ENCODE measurements at regions of chr10 and their contacts with region 1.

Region 1: GRCh38 chr10:28669227-28670167 is 7.8 kb upstream of the BAMBI start:
- DNase-seq: no peak
- ATAC-seq: no peak
- H3K4me3 ChIP-seq: peak overlapping the region in 11 of 12 donors; percentile 23 to 67 (median 51)
- H3K27ac ChIP-seq: no peak overlapping the region
- H3K4me1 ChIP-seq: peaks cover 0 to 13% (median 3%) of the 10 kb centered on the region in 12 donors
- H3K27me3 ChIP-seq: peaks cover 0 to 58% (median 0%) of the 10 kb centered on the region in 9 donors
- CTCF ChIP-seq: no peak
- POLR2A ChIP-seq: no peak

Region 2: GRCh38 chr10:28628184-28628893 is 41.2 kb before region 1 on chr10:
- intact Hi-C with region 1: no loop called
- DNase-seq: peak; percentile 68 to 86 (median 76)
- ATAC-seq: peak; percentile 28 to 93 (median 88)
- H3K4me3 ChIP-seq: no peak overlapping the region
- H3K27ac ChIP-seq: no peak overlapping the region
- H3K4me1 ChIP-seq: peaks cover 0 to 8% (median 0%) of the 10 kb centered on the region in 12 donors
- H3K27me3 ChIP-seq: peaks cover 0 to 10% (median 0%) of the 10 kb centered on the region in 9 donors
- CTCF ChIP-seq: peak; percentile 77 to 98 (median 85)
- POLR2A ChIP-seq: no peak

Region 3: DNA sequence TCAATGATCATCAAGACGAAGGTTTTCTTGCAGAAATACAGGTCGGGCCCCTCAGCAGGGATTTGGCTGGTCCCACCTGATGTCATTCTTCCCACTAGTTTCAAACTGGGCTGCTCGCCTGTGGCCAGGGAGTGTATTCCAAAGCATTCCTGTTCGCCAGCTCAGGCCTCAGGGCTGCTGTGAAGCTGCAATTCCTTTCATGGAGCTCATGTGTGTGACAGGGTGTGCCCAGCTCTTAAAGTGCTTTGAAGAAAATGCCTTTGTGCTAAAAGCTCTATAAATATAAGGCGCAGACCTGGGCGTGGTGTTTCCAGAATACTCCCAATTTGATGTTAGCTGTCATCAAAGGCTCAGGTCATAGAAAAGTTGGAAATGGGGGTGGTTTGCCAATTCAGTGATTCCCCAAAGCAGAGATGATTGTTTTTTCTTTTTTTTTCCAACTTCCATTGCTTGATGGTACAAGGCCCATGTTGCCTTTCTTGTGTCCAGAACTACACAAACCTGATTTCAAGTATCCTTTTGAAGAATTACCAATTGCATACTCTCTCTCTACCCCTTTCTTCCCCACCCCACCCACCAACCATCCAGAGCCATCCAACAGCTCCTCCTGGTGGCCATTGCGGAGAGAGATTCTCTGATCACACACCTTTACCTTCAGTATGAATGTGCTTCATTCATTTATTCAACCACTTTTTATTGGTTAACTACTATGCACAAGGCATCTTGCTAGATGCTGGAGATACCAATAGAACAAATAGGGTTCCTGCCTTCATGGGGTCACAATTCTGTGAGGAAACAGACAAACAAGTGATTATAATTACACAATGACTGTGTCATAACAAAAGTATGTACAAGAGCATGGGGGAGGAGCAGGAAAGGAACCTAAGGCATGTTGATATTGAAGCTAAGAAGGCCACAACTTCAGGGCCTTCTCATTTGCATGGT is 322.1 kb after region 1 on chr10:
- intact Hi-C with region 1: loop called in 7 of 10 experiments (anchors 1 to 5 kb)
- DNase-seq: peak in 4 of 5 donors; percentile 24 to 42 (median 38)
- ATAC-seq: peak; percentile 66 to 90 (median 88)
- H3K4me3 ChIP-seq: no peak overlapping the region
- H3K27ac ChIP-seq: peak overlapping the region in 3 of 12 donors; percentile 17 to 71 (median 39)
- H3K4me1 ChIP-seq: peaks cover 0 to 7% (median 0%) of the 10 kb centered on the region in 12 donors
- H3K27me3 ChIP-seq: no peaks in the 10 kb centered on the region
- CTCF ChIP-seq: peak; percentile 59 to 78 (median 68)
- POLR2A ChIP-seq: no peak